ENCODE measurements at regions of chr6 and their contacts with region 1.

Region 1: DNA sequence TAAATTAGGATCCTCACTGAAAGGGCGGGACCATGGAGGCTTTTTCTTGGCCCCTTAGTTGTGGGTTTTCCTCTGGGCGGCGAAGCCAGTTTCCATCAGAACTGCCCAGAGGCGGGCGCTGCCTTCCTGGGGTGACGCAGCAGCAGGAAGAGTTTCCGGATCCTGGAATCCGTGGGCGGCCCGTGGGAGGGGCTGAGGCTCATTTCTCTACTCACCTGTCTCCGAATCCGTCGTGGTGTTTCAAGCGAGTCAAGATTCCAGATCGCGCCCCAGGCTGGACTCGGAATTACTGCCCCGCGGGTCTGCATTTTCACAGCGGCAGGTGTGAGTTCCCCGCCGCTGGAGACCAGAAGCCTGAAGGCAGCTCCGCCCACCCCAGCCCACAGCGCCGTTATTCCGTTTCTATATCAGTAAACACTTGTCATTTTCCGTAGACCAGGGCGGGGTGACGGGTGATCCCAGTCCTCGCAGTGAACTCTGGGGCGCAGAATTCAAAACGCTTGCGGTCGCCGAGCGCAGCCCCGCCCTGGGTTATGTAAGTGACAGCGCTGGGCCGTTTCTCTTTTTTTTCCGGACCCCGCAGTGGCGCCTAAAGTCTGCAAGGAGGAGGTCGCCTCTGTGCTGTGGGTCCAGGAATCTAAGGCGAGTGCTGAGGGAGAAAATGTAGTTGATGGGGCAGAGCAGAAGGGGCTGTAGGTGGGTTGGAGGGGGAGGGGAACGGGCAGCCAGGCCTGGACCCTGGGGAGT is 27.2 kb upstream of the POU5F1 start:
- H3K4me3 Mint-ChIP-seq: peak overlapping the region; percentile 90
- H3K27ac Mint-ChIP-seq: peak overlapping the region; percentile 97
- H3K4me1 Mint-ChIP-seq: peaks cover 55% of the 10 kb centered on the region
- H3K27me3 Mint-ChIP-seq: no peaks in the 10 kb centered on the region

Region 2: GRCh38 chr6:31139599-31139998 is 58.1 kb before region 1 on chr6:
- intact Hi-C with region 1: loop called (anchors 1 kb)
- H3K4me3 Mint-ChIP-seq: no peak overlapping the region
- H3K27ac Mint-ChIP-seq: no peak overlapping the region
- H3K4me1 Mint-ChIP-seq: peaks cover 8% of the 10 kb centered on the region
- H3K27me3 Mint-ChIP-seq: peaks cover 11% of the 10 kb centered on the region

Region 3: GRCh38 chr6:31271641-31272357 is 74.1 kb after region 1 on chr6 and contains the start of gene HLA-C:
- intact Hi-C with region 1: loop called (anchors 1 kb)
- H3K4me3 Mint-ChIP-seq: peak within 1 kb of the TSS; percentile 94
- H3K27ac Mint-ChIP-seq: peak within 1 kb of the TSS; percentile 90
- H3K4me1 Mint-ChIP-seq: peaks cover 55% of the 10 kb centered on the region
- H3K27me3 Mint-ChIP-seq: peaks cover 14% of the 10 kb centered on the region

Region 4: DNA sequence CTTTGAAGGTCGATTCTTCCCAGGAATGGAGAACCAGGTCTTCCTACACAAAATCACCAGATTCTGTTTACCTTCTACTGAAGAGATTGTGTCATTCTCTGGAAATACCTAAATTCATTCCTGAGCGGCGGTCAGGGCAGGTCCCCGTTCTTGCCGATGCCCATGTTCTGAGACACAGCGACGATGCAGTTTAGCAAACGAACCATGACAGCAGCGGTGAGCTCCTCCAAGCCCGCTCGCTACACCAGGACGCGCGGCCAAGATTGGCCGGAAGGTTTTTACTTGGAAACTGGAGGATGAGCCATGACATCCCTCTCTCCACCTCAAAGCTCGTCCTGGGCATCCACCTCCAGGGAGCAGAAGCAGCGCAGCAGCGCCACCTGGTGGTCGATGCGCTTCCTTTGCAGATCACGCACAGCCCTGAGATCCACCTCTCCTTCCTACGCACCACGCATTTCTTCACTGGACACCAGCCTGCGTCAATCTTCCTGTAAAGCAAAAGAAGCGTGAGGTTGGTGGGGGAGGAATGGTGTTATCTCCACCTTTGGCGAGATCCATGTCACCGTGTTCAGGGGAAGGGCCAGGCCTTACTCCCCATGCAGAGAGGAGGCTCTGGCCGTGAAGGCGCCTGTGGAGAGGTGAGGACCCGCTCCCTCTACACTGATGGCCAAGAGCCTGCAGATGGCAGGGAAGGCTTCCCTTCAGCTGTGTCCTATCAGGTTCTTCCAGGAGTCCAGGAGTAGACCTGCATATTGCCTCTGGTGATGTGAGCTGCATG is 169.2 kb after region 1 on chr6:
- intact Hi-C with region 1: loop called (anchors 1 kb)
- H3K4me3 Mint-ChIP-seq: peak overlapping the region; percentile 60
- H3K27ac Mint-ChIP-seq: no peak overlapping the region
- H3K4me1 Mint-ChIP-seq: peaks cover 16% of the 10 kb centered on the region
- H3K27me3 Mint-ChIP-seq: peaks cover 37% of the 10 kb centered on the region

Region 5: DNA sequence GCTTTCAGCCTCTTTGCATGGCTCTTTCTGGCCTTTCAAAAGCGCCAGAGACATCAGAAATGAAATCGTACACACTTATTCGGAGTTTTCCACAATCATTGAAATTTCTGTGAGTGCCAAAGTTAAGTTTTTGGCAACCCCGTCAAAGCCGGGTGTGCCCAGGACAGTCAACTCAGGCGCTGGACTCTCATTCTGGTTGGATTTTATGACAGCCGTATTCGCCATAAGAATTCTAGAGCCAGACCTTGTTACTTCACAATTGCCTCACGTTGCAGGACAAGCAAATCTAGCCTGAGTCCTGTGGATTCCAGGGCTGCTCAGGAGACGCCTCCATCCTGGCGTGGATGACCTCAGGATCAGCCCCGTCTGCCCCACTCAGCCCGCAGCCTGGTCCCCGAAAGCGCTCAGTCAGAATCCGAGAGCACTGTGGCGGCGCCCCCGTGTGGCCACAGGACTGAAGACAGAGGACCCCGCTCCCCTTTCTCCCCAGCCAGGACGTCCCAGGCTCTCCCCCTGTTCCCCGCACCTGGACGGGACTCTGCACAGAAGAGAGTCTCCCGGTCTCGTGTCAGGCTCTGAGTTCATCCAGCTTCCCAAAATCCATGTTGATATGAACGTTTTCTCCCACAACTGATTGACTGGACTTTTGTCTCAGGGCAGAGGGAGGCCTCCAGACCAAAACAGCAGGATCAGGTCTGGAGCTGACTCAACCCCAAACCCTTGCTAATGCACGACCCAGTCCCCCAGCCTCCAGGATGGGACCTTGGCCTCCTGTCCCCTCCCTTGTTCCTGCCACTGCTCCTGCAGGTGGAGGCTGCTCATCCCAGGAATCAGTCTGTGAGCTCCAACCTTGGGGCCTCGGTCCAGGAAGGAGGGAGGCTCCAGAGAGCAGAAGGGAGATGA is 243.9 kb after region 1 on chr6:
- intact Hi-C with region 1: loop called (anchors 10 kb)
- H3K4me3 Mint-ChIP-seq: no peak overlapping the region
- H3K27ac Mint-ChIP-seq: no peak overlapping the region
- H3K4me1 Mint-ChIP-seq: peaks cover 6% of the 10 kb centered on the region
- H3K27me3 Mint-ChIP-seq: peaks cover 65% of the 10 kb centered on the region